Activated B cell treated with CpG ODN at 0.5 μM for 24 hours (primary cell): ENCODE measurements at regions of chr12 and their contacts with region 1.

Region 1: GRCh38 chr12:56189176-56189917 is at the start of gene SMARCC2:
- DNase-seq: peak; percentile 82
- ATAC-seq: peak; percentile 81
- H3K4me3 Mint-ChIP-seq: peak within 1 kb of the TSS; percentile 95
- H3K27ac Mint-ChIP-seq: peak within 1 kb of the TSS; percentile 96
- H3K4me1 Mint-ChIP-seq: peaks cover 43% of the 10 kb centered on the region
- H3K27me3 Mint-ChIP-seq: no peaks in the 10 kb centered on the region
- CTCF ChIP-seq: no peak
- total RNA-seq, gene SMARCC2: 109 and 136 TPM in 2 replicates

Region 2: GRCh38 chr12:56104109-56104814 is 85.1 kb before region 1 on chr12 and contains the start of gene PA2G4:
- CTCF ChIA-PET with region 1: no interaction called
- POLR2A ChIA-PET with region 1: interaction called, 19 read pairs
- intact Hi-C with region 1: no loop called
- DNase-seq: peak; percentile 92
- ATAC-seq: peak; percentile 91
- H3K4me3 Mint-ChIP-seq: peak within 1 kb of the TSS; percentile 98
- H3K27ac Mint-ChIP-seq: peak within 1 kb of the TSS; percentile 93
- H3K4me1 Mint-ChIP-seq: peaks cover 33% of the 10 kb centered on the region
- H3K27me3 Mint-ChIP-seq: no peaks in the 10 kb centered on the region
- CTCF ChIP-seq: no peak
- total RNA-seq, gene PA2G4: 137 and 155 TPM in 2 replicates

Region 3: DNA sequence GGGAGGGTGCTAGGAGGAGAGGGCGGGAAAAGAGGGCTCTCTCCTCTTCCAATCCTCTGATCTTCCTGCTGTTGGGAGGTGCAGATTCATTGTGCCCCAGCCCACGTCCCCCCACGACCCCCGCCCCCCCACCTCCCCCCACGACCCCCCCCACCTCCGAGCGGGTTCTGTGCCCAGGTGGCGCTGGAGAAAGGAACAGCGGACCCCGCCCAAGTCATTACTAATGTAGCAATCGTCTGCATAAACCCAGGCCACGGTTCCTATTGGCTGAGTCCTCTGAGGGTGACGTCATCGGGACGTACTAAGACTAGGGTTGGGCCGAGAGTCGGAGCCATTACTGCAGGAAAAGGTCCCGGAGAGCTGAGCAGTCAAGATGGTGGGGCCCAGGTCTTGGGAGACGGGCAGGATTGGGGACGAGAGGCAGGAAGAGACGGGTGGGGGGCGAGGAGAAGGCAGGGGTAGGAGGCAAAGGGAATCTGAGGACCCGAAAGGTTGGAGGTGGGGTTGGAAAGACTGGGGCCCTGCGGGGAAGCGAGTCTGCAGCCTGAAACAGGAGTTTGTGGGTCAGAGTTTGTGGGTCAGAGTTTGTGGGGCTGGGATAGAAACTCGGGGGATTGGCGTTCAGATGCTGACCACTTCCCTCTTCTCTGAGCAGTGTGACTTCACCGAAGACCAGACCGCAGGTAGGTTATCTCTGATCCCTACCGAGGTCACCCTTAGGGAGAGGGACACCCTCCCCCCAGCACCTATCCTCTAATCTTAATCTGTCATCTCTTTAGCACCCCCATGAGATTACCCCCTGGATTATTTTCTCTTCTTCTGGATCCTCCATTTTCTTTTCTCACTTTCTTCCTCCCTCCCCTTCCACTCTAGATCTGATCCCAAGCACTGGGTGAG is 31.1 kb before region 1 on chr12 and contains the start of gene MYL6:
- CTCF ChIA-PET with region 1: interaction called, 13 read pairs
- POLR2A ChIA-PET with region 1: interaction called, 29 read pairs
- intact Hi-C with region 1: loop called (anchors 1 kb)
- DNase-seq: peak; percentile 70
- ATAC-seq: peak; percentile 86
- H3K4me3 Mint-ChIP-seq: peak within 1 kb of the TSS; percentile 94
- H3K27ac Mint-ChIP-seq: peak within 1 kb of the TSS; percentile 95
- H3K4me1 Mint-ChIP-seq: peaks cover 48% of the 10 kb centered on the region
- H3K27me3 Mint-ChIP-seq: no peaks in the 10 kb centered on the region
- CTCF ChIP-seq: no peak
- total RNA-seq, gene MYL6: 921 and 1,059 TPM in 2 replicates

Region 4: DNA sequence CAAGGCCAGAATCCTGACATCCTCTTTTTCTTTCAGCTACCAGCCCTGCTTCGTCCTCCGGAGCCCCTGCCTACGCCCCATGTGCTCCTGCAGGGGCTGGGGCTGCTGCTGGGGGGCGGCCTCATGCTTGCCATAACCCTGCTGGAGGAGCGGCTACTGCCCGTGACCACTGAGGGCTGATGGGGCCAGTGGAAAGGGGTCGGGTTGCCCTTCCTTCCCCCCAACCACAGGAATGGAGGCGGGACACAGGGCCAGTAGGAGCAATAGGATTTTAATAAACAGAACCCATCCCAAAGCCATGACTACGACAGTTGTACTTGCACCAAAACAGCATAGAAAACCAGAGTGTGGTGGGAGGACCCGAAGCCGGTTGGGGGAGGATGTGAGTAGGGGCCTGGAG is 48.2 kb after region 1 on chr12:
- CTCF ChIA-PET with region 1: no interaction called
- POLR2A ChIA-PET with region 1: interaction called, 11 read pairs
- intact Hi-C with region 1: no loop called
- DNase-seq: no peak
- ATAC-seq: no peak
- H3K4me3 Mint-ChIP-seq: no peak overlapping the region
- H3K27ac Mint-ChIP-seq: no peak overlapping the region
- H3K4me1 Mint-ChIP-seq: peaks cover 8% of the 10 kb centered on the region
- H3K27me3 Mint-ChIP-seq: no peaks in the 10 kb centered on the region
- CTCF ChIP-seq: no peak

Region 5: GRCh38 chr12:56315622-56316473 is 126.5 kb after region 1 on chr12 and contains the start of gene CNPY2:
- CTCF ChIA-PET with region 1: no interaction called
- POLR2A ChIA-PET with region 1: interaction called, 13 read pairs
- intact Hi-C with region 1: no loop called
- DNase-seq: peak; percentile 85
- ATAC-seq: peak; percentile 89
- H3K4me3 Mint-ChIP-seq: peak within 1 kb of the TSS; percentile 98
- H3K27ac Mint-ChIP-seq: peak within 1 kb of the TSS; percentile 98
- H3K4me1 Mint-ChIP-seq: peaks cover 21% of the 10 kb centered on the region
- H3K27me3 Mint-ChIP-seq: no peaks in the 10 kb centered on the region
- CTCF ChIP-seq: no peak
- total RNA-seq, gene CNPY2: 72.1 and 98.8 TPM in 2 replicates

Region 6: DNA sequence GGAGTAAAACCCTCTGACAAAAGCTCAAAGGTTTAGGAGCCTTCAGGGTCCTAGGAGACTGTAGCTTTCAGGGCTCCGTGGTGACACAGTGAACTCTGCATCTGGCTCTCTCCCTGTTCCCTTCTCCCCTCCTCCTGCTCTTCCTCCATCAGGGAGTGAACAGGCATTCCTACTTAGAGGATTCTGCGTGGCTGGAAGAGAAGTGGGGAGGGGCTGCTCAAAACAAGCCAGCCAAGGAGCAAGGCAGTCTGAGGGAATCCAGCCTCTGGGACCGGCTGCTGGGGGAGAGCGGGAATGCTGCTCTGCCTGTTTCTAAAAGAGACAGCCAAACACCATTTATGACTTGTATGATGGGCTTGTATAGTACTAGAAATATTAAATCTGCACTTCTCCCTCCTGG is 381.8 kb after region 1 on chr12:
- CTCF ChIA-PET with region 1: no interaction called
- POLR2A ChIA-PET with region 1: no interaction called
- intact Hi-C with region 1: loop called (anchors 1 kb)
- DNase-seq: no peak
- ATAC-seq: no peak
- H3K4me3 Mint-ChIP-seq: no peak overlapping the region
- H3K27ac Mint-ChIP-seq: no peak overlapping the region
- H3K4me1 Mint-ChIP-seq: peaks cover 3% of the 10 kb centered on the region
- H3K27me3 Mint-ChIP-seq: no peaks in the 10 kb centered on the region
- CTCF ChIP-seq: no peak

Region 7: DNA sequence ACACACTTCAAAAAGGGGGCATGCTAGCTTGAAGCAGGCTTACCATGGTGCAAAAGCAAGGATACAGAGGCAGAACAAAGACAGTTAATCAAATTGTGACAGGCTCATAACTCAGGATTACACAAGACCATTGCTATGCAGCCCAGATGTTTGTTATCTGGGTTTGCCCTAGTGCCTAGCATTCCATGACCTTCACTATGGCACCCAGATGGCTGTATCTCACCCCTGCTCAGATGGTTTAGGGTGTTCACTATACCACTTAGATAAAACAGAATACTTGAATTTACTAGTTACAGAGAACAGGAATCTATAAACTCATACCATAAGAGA is 688.6 kb after region 1 on chr12:
- CTCF ChIA-PET with region 1: no interaction called
- POLR2A ChIA-PET with region 1: no interaction called
- intact Hi-C with region 1: no loop called
- DNase-seq: no peak
- ATAC-seq: no peak
- H3K4me3 Mint-ChIP-seq: no peak overlapping the region
- H3K27ac Mint-ChIP-seq: no peak overlapping the region
- H3K4me1 Mint-ChIP-seq: no peaks in the 10 kb centered on the region
- H3K27me3 Mint-ChIP-seq: peaks cover 15% of the 10 kb centered on the region
- CTCF ChIP-seq: no peak